ENCODE measurements at regions of chr2 and their contacts with region 1.

Region 1: DNA sequence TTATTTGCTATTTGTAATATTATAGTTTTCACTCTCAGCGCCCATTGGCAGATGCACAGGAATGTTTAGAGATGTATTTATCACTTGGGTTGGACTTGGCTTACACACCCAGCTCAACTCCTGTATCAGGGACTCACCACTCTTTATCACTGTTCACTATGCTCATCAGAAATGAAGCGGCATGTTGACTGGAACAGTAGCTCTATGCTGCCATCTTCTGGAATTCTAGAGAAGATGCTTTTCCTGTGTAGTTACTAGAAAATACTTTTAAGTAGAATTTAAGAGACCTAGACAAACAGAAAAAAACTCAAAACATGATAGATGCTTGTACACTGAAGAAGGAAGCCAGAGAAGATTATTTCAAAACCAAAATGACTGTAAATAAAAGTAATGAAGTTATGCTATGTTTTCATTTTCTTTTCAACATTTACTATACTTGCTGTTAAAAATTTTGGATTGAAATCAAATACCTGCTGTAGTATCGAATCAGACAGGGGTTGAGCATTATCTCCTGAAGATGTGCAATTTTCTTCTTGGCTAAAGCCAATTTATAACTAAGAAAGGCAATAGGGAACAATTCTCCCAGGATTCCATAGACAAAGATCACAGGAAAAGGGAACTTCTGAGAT is 47.4 kb upstream of the NXPH2 start:
- DNase-seq: no peak
- H3K4me3 Mint-ChIP-seq: no peak overlapping the region
- H3K27ac Mint-ChIP-seq: no peak overlapping the region
- H3K4me1 Mint-ChIP-seq: no peaks in the 10 kb centered on the region
- H3K27me3 Mint-ChIP-seq: peaks cover 8% of the 10 kb centered on the region

Region 2: DNA sequence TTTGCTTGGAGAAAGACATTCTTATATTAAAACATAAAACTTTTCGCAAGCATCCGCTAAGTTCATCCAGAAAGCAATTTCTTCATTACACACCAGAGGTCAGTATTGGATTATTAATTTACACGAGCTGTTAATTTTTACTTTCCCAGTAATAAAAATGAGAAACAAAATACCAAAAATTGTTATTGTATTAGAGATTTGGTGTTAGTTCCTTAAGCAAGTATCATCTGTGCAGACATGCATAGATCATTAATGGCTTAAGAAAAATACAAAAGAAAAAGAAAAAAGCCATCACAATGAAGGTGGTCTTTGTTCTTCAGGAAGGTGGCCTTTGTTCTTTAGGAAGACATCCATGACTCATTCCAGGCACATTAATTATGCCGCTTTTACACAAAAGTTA is 916.9 kb before region 1 on chr2:
- intact Hi-C with region 1: loop called (anchors 1 kb)
- DNase-seq: no peak
- H3K4me3 Mint-ChIP-seq: no peak overlapping the region
- H3K27ac Mint-ChIP-seq: no peak overlapping the region
- H3K4me1 Mint-ChIP-seq: no peaks in the 10 kb centered on the region
- H3K27me3 Mint-ChIP-seq: no peaks in the 10 kb centered on the region

Region 3: DNA sequence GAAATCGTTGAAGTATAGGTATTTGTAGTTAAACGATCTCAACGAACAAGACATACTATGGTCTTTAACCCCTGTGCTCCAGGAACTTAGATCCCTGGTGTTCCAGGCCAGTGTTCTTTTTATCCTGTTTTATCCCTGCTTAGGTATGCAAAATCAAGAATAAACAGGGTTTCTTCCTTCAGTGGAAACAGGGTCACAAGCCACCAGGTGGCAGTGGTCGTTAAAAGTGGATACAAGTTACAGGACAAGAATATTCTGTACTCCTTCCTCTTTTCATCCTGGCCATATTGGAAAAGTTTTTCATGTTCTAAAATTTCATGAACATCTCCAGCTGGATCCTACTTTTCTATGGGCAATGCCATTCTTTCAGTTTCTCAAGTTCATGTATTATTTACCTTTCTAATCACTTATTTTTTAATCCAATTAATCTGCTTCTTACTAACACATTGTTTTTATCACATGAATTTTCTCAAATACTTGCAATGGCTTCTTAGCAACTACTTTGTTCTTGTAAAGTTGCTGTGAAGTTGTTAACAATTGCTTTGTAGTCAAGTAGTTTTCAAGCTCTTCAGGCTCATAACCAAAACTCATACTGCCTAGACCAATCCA is 879.7 kb before region 1 on chr2:
- intact Hi-C with region 1: loop called (anchors 1 kb)
- DNase-seq: no peak
- H3K4me3 Mint-ChIP-seq: no peak overlapping the region
- H3K27ac Mint-ChIP-seq: no peak overlapping the region
- H3K4me1 Mint-ChIP-seq: peaks cover 8% of the 10 kb centered on the region
- H3K27me3 Mint-ChIP-seq: no peaks in the 10 kb centered on the region

Region 4: GRCh38 chr2:138730497-138731030 is 97.0 kb before region 1 on chr2:
- intact Hi-C with region 1: no loop called
- DNase-seq: no peak
- H3K4me3 Mint-ChIP-seq: no peak overlapping the region
- H3K27ac Mint-ChIP-seq: no peak overlapping the region
- H3K4me1 Mint-ChIP-seq: no peaks in the 10 kb centered on the region
- H3K27me3 Mint-ChIP-seq: no peaks in the 10 kb centered on the region

Region 5: GRCh38 chr2:138777996-138778395 is 49.5 kb before region 1 on chr2:
- intact Hi-C with region 1: no loop called
- DNase-seq: no peak
- H3K4me3 Mint-ChIP-seq: no peak overlapping the region
- H3K27ac Mint-ChIP-seq: no peak overlapping the region
- H3K4me1 Mint-ChIP-seq: no peaks in the 10 kb centered on the region
- H3K27me3 Mint-ChIP-seq: peaks cover 40% of the 10 kb centered on the region

Measured in activated T-helper 1 cell treated with anti-CD3 and anti-CD28 coated beads, Interleukin-12 subunit alpha, Interleukin-12 subunit beta, Interleukin-2, Interleukin-4 antibody, amounts not matched to agents 30 ng/mL and 10 ng/mL and 1 ng/mL, durations not matched to agents 14 hours and 24 hours and 36 hours (primary cell).